A549 (cell line): ENCODE measurements at regions of chr19 and their contacts with region 1.

Region 1: GRCh38 chr19:588093-588740 is 1.5 kb upstream of the HCN2 start:
- DNase-seq: peak in 1 of 2 experiments; percentile 92
- ATAC-seq: peak; percentile 55 to 73
- H3K4me3 ChIP-seq: peak overlapping the region; percentile 49; the same call in 2 of the 3 replicates
- H3K27ac ChIP-seq: peak overlapping the region; percentile 82 to 93
- H3K4me1 ChIP-seq: peaks cover 53% of the 10 kb centered on the region
- CTCF ChIP-seq: peak; percentile 52
- EP300 ChIP-seq: no peak
- POLR2A ChIP-seq: 0 out of 2 replicates have a peak, but pooled peaks have one; percentile 13
- RAD21 ChIP-seq: peak; percentile 44 to 63

Region 2: GRCh38 chr19:633068-633785 is 45.0 kb after region 1 on chr19 and contains the start of gene POLRMT:
- CTCF ChIA-PET with region 1: interaction called, 13 read pairs
- POLR2A ChIA-PET with region 1: no interaction called
- DNase-seq: peak; percentile 97 to 99
- ATAC-seq: peak; percentile 90
- H3K4me3 ChIP-seq: peak within 1 kb of the TSS; percentile 91
- H3K27ac ChIP-seq: peak within 1 kb of the TSS; percentile 94 to 97
- H3K4me1 ChIP-seq: peaks cover 25% of the 10 kb centered on the region
- CTCF ChIP-seq: no peak
- EP300 ChIP-seq: no peak
- POLR2A ChIP-seq: peak; percentile 45; the same call in 1 of the 2 replicates
- RAD21 ChIP-seq: no peak
- polyA plus RNA-seq, gene POLRMT: 41.9 and 59.8 TPM in 2 replicates

Region 3: DNA sequence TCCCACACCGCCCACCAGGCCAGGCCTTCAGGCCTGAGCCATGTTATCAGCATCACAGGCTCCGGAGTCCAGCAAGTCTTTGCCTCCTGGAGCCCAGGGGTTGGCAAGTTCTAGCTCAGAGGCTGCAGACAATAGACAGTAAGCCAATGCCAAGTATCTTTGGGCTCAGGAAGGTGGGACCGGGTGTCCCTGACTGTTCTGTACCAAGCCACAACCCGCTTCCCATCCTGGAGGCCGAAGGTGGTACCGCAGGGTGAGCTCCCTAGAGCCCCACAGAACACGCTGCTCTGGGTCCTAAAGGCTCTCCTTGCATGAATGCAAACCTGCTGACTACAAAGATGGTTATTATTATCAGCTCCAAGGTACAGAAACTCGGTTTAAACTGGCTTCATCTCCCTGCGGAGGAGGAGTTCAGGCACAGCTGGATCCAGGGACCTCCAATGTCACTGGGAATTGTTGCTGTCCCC is 82.4 kb after region 1 on chr19:
- CTCF ChIA-PET with region 1: no interaction called
- POLR2A ChIA-PET with region 1: no interaction called
- DNase-seq: peak; percentile 22 to 55
- ATAC-seq: peak; percentile 72 to 79
- H3K4me3 ChIP-seq: no peak overlapping the region
- H3K27ac ChIP-seq: no peak overlapping the region
- H3K4me1 ChIP-seq: peaks cover 6% of the 10 kb centered on the region
- CTCF ChIP-seq: no peak
- EP300 ChIP-seq: no peak
- POLR2A ChIP-seq: no peak
- RAD21 ChIP-seq: no peak